H1 (cell line): ENCODE measurements at regions of chr2 and their contacts with region 1.

Region 1: DNA sequence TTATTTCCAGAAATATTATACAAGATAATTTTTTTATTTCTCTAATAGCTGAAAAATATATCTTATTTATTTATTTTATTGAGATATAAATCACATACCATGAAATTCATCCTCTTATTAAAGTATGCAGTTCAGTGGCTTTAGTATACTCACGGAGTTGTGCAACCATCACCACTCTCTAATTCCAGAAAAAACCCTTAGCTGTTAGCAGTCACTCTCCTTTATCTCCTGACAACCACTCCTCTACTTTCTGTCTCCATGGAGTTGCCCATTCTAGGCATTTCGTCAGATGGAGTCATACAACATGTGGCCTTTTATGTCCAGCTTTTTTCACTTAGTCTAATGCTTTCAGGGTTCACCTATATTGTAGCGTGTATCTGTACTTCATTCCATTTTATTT is 66.5 kb downstream of the TCF7L1 start:
- DNase-seq: no peak
- H3K4me3 ChIP-seq: no peak overlapping the region
- H3K27ac ChIP-seq: no peak overlapping the region
- H3K4me1 ChIP-seq: no peaks in the 10 kb centered on the region; a peak in 1 of 7 replicates
- H3K27me3 ChIP-seq: no peaks in the 10 kb centered on the region
- CTCF ChIP-seq: no peak
- EP300 ChIP-seq: no peak
- POLR2A ChIP-seq: no peak
- RAD21 ChIP-seq: no peak

Region 2: GRCh38 chr2:85215448-85216401 is 16.0 kb after region 1 on chr2:
- CTCF ChIA-PET with region 1: interaction called, 16 read pairs
- POLR2A ChIA-PET with region 1: interaction called, 8 read pairs
- DNase-seq: no peak
- H3K4me3 ChIP-seq: peak overlapping the region in 1 of 4 experiments; percentile 39; a peak in 2 of 8 replicates
- H3K27ac ChIP-seq: peak overlapping the region; percentile 62
- H3K4me1 ChIP-seq: peaks cover 22 to 41% (median 27%) of the 10 kb centered on the region in 4 experiments
- H3K27me3 ChIP-seq: no peaks in the 10 kb centered on the region
- CTCF ChIP-seq: no peak
- EP300 ChIP-seq: 0 out of 3 replicates have a peak, but pooled peaks of 1 of the 2 experiments have one; percentile 42
- POLR2A ChIP-seq: no peak
- RAD21 ChIP-seq: no peak